ENCODE measurements at regions of chr2 and their contacts with region 1.

Region 1: DNA sequence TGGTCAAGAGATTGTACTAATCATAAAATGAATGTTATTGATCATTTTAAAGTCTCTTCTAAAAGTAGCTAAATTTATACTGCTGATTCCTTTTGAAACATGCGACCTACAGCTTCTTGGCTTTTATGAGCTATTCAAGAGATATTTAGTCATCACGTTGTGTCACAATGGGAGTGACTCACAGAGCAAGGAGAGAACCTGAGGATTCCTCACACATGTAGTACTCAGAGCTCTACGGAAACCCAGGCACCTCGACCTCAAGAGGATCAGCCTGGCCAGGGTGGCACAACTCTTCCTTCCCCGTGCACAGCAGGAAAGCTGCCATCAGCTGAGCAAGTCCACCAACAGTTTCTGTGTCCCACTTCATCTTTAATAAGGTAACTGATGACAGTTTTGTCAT is at the start of gene DHRS9:
- DNase-seq: peak; percentile 94
- H3K4me3 ChIP-seq: no peak within 1 kb of the TSS
- H3K27ac ChIP-seq: peak within 1 kb of the TSS; percentile 34
- H3K4me1 ChIP-seq: peaks cover 35% of the 10 kb centered on the region
- H3K27me3 ChIP-seq: no peaks in the 10 kb centered on the region
- CTCF ChIP-seq: no peak
- total RNA-seq, gene DHRS9: not detected

Region 2: DNA sequence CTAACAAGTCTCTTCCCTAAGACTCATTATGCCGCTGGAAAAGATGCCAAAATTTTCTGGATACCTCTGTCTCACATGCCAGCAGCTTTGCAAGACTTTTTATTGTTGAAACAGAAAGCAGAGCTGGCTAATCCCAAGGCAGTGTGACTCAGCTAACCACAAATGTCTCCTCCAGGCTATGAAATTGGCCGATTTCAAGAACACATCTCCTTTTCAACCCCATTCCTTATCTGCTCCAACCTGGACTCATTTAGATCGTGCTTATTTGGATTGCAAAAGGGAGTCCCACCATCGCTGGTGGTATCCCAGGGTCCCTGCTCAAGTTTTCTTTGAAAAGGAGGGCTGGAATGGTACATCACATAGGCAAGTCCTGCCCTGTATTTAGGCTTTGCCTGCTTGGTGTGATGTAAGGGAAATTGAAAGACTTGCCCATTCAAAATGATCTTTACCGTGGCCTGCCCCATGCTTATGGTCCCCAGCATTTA is 26.3 kb after region 1 on chr2:
- CTCF ChIA-PET with region 1: no interaction called
- dilution Hi-C with region 1: no loop called
- in situ Hi-C with region 1: no loop called
- intact Hi-C with region 1: loop called (anchors 2 kb)
- DNase-seq: peak; percentile 96
- H3K4me3 ChIP-seq: peak overlapping the region in 1 of 3 experiments; percentile 8
- H3K27ac ChIP-seq: no peak overlapping the region
- H3K4me1 ChIP-seq: peaks cover 37% of the 10 kb centered on the region
- H3K27me3 ChIP-seq: no peaks in the 10 kb centered on the region
- CTCF ChIP-seq: no peak

Measured in mammary epithelial cell (primary cell).